Left colon (tissue), 2 donors: ENCODE measurements at regions of chr3 and their contacts with region 1.

Region 1: DNA sequence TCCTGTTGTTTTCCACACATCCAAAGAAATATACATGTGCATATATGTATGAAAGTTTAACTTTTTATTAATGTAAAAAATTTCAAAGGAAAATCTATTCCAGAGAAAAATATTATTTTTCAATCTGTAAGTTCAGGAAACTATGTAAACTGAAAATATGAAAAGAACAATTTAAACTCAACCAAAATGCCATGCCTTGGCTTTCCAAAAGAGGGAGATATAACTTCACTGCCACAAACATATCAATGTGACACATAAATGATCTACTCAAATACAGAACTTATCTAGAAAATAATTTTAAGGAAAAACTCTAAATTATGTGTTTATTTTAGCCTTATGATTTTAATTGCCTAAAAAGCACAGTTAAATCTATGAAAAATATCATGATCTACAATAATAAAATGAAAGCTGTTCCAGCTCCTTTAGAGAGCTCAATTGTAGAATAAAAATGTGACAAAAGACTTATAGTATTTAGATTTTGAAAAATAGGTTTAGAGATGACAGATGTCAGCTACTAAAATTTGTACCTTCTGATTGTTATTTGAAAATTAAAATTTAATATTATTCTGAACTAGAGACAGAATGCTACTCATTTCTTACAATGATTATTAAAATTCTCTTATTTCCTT is 94.8 kb downstream of the GBE1 start:
- DNase-seq: no peak
- ATAC-seq: peak; percentile 43

Region 2: GRCh38 chr3:82133070-82133606 is 466.5 kb after region 1 on chr3:
- intact Hi-C with region 1: loop called in 1 of 2 experiments (anchors 5 kb)
- DNase-seq: peak; percentile 27 to 63
- ATAC-seq: peak; percentile 70